IMR-90 (cell line): ENCODE measurements at regions of chr12 and their contacts with region 1.

Region 1: DNA sequence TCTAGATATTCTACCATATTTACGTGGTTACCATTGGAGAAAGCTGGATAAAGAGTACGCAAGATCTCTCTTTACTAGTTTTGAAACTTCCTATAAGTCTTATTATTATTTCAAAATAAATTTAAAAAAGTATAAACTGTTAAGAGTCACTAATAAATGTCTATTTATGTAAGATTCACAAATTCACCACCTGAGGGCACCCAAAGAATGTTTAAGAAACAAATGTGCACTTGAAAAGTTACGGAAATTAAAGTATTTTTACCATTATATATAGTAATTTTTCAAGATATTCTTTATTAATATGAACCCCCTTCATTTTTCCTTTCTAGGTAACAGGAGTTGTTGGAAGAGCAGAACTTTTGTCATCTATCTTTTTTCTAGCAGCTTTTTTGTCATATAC is 11.9 kb downstream of the TMTC3 start:
- DNase-seq: peak; percentile 70
- ATAC-seq: no peak
- H3K4me3 ChIP-seq: no peak overlapping the region
- H3K27ac ChIP-seq: no peak overlapping the region
- H3K4me1 ChIP-seq: no peaks in the 10 kb centered on the region
- H3K27me3 ChIP-seq: no peaks in the 10 kb centered on the region
- CTCF ChIP-seq: peak; percentile 59
- POLR2A ChIP-seq: no peak
- RAD21 ChIP-seq: peak; percentile 67

Region 2: DNA sequence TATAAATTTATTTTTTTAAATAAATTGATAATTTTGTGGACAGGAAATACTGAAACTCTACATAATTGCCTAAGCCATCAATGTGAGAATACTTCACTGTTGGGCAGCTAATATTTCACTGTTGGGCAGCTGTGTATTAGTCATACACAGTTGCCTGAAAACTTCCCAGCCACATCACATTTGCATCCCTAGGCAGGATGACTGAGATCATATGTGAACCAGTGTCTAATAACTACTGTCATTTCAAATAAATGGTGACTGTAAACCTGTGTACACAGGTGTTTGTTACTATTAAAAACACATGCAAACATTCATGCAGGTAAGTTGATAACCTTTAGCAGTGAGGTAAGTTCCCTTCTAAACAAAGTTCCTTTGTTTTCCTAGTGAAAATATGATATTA is 32.0 kb after region 1 on chr12:
- CTCF ChIA-PET with region 1: no interaction called
- POLR2A ChIA-PET with region 1: interaction called, 13 read pairs
- dilution Hi-C with region 1: no loop called
- in situ Hi-C with region 1: no loop called
- intact Hi-C with region 1: no loop called
- DNase-seq: peak; percentile 83
- ATAC-seq: peak; percentile 76
- H3K4me3 ChIP-seq: no peak overlapping the region
- H3K27ac ChIP-seq: no peak overlapping the region
- H3K4me1 ChIP-seq: no peaks in the 10 kb centered on the region
- H3K27me3 ChIP-seq: no peaks in the 10 kb centered on the region
- CTCF ChIP-seq: no peak
- POLR2A ChIP-seq: no peak
- RAD21 ChIP-seq: no peak

Region 3: DNA sequence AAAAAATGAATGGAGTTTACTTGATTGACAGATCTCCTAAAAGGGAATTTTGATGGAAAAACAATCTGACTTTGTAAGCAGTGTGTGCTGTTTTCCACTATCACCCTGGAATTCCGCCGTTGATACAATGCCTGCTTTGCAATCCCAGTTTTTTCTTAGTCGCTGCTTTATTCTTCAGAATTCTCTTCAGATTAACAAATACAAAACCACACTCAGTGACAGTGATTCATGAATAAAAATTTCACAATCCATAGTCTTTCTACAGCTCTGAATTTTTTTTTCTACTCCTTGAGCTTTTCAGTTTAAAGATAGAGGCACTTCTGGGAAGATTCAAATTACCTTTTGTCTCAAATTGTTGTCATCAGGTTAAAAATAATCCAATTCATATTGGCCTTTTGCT is 471.0 kb after region 1 on chr12:
- CTCF ChIA-PET with region 1: no interaction called
- POLR2A ChIA-PET with region 1: no interaction called
- dilution Hi-C with region 1: no loop called
- in situ Hi-C with region 1: no loop called
- intact Hi-C with region 1: loop called (anchors 5 kb)
- DNase-seq: peak; percentile 62
- ATAC-seq: no peak
- H3K4me3 ChIP-seq: no peak overlapping the region
- H3K27ac ChIP-seq: no peak overlapping the region
- H3K4me1 ChIP-seq: no peaks in the 10 kb centered on the region
- H3K27me3 ChIP-seq: no peaks in the 10 kb centered on the region
- CTCF ChIP-seq: no peak
- POLR2A ChIP-seq: no peak
- RAD21 ChIP-seq: no peak